ENCODE measurements at regions of chr17 and their contacts with region 1.

Region 1: DNA sequence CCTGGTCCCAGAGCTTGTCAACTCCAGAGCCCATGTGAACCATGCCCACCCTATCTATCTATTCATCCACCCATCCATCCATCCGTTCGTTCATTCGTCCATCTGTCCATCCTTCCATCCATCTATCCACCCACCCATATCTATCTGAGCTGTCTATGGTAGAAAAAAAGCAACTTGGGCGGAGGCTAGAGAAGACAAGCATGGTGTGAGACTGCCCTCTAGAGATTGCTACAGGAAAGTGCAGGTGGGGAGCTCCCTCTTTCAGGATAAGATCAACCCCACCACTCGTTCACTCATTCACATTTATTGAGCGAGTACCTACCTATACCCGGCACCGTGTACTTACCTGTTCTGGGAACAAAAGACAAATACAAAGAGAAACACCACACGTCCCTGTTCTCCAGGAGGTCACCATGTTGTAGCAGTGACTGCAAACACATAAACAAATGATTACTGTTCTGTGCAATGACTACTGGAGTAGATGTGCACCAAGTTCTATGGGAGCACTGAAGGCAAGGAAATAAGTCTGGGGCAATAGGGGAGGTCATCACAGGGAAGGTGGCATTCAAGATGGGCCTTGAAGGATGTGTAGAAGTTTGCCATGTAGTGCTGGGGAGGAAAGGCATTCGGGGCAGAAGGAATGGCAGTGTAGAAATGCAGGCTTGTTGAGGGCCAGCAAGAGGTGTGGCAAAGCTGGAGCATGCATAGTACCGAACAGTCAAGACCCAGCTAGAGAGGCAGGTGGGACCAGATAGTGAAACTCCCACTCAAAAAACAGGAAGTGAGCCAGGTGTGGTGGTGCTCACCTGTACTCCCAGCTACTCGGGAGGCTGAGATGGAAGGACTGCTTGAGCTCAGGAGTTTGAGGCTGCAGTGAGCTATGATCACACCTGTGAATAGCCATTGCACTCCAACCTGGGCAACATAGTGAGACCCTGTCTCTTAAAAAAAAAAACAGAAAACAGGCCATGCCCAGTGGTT is 13.4 kb upstream of the ATP5MC1 start:
- DNase-seq: peak in 2 of 5 donors; percentile 42 to 54
- ATAC-seq: peak; percentile 62 to 88 (median 86)
- H3K4me3 ChIP-seq: no peak overlapping the region
- H3K27ac ChIP-seq: no peak overlapping the region
- H3K4me1 ChIP-seq: peaks cover 0 to 6% (median 0%) of the 10 kb centered on the region in 12 donors
- H3K27me3 ChIP-seq: no peaks in the 10 kb centered on the region
- CTCF ChIP-seq: peak; percentile 84 to 96 (median 92)
- POLR2A ChIP-seq: no peak

Region 2: GRCh38 chr17:48678141-48678971 is 200.9 kb before region 1 on chr17:
- intact Hi-C with region 1: loop called in 9 of 10 experiments (anchors 2 to 5 kb)
- DNase-seq: peak; percentile 30 to 80 (median 48)
- ATAC-seq: peak in 3 of 4 donors; percentile 76 to 86 (median 82)
- H3K4me3 ChIP-seq: no peak overlapping the region
- H3K27ac ChIP-seq: no peak overlapping the region
- H3K4me1 ChIP-seq: peaks cover 0 to 6% (median 0%) of the 10 kb centered on the region in 12 donors
- H3K27me3 ChIP-seq: peaks cover 9 to 80% (median 32%) of the 10 kb centered on the region in 9 donors
- CTCF ChIP-seq: peak; percentile 83 to 98 (median 91)
- POLR2A ChIP-seq: no peak

Region 3: GRCh38 chr17:48756830-48757251 is 122.4 kb before region 1 on chr17:
- intact Hi-C with region 1: no loop called
- DNase-seq: no peak
- ATAC-seq: no peak
- H3K4me3 ChIP-seq: no peak overlapping the region
- H3K27ac ChIP-seq: no peak overlapping the region
- H3K4me1 ChIP-seq: peaks cover 0 to 35% (median 0%) of the 10 kb centered on the region in 12 donors
- H3K27me3 ChIP-seq: peaks cover 43 to 99% (median 90%) of the 10 kb centered on the region in 9 donors
- CTCF ChIP-seq: no peak
- POLR2A ChIP-seq: no peak

Region 4: GRCh38 chr17:48804925-48805411 is 74.2 kb before region 1 on chr17:
- intact Hi-C with region 1: loop called in 9 of 10 experiments (anchors 1 to 2 kb)
- DNase-seq: peak in 4 of 5 donors; percentile 33 to 70 (median 44)
- ATAC-seq: peak in 3 of 4 donors; percentile 86 to 90 (median 87)
- H3K4me3 ChIP-seq: no peak overlapping the region
- H3K27ac ChIP-seq: no peak overlapping the region
- H3K4me1 ChIP-seq: peaks cover 0 to 8% (median 3%) of the 10 kb centered on the region in 12 donors
- H3K27me3 ChIP-seq: peaks cover 0 to 9% (median 0%) of the 10 kb centered on the region in 9 donors
- CTCF ChIP-seq: peak; percentile 81 to 95 (median 90)
- POLR2A ChIP-seq: no peak

Region 5: GRCh38 chr17:48841395-48841831 is 37.8 kb before region 1 on chr17:
- intact Hi-C with region 1: loop called in 1 of 10 experiments (anchors 5 kb)
- DNase-seq: peak in 2 of 5 donors; percentile 23 to 55
- ATAC-seq: peak; percentile 64 to 86 (median 75)
- H3K4me3 ChIP-seq: peak overlapping the region in 11 of 12 donors; percentile 2 to 52 (median 38)
- H3K27ac ChIP-seq: peak overlapping the region; percentile 86 to 95 (median 90)
- H3K4me1 ChIP-seq: peaks cover 18 to 87% (median 59%) of the 10 kb centered on the region in 12 donors
- H3K27me3 ChIP-seq: no peaks in the 10 kb centered on the region
- CTCF ChIP-seq: no peak
- POLR2A ChIP-seq: peak in 1 of 2 donors; percentile 57

Region 6: GRCh38 chr17:48894886-48895285 is 15.7 kb after region 1 on chr17:
- intact Hi-C with region 1: no loop called
- DNase-seq: no peak
- ATAC-seq: no peak
- H3K4me3 ChIP-seq: no peak overlapping the region
- H3K27ac ChIP-seq: no peak overlapping the region
- H3K4me1 ChIP-seq: peaks cover 0 to 34% (median 15%) of the 10 kb centered on the region in 12 donors
- H3K27me3 ChIP-seq: no peaks in the 10 kb centered on the region
- CTCF ChIP-seq: no peak
- POLR2A ChIP-seq: no peak